ENCODE measurements at regions of chr2 and their contacts with region 1.

Region 1: GRCh38 chr2:182666674-182667314 is 49.3 kb upstream of the DNAJC10 start:
- DNase-seq: peak in 1 of 2 experiments; percentile 20
- H3K4me3 ChIP-seq: no peak overlapping the region
- H3K4me3 Mint-ChIP-seq: no peak overlapping the region
- H3K27ac Mint-ChIP-seq: no peak overlapping the region
- H3K4me1 ChIP-seq: no peaks in the 10 kb centered on the region
- H3K4me1 Mint-ChIP-seq: no peaks in the 10 kb centered on the region
- H3K27me3 ChIP-seq: no peaks in the 10 kb centered on the region; the same call in 1 of the 2 replicates
- H3K27me3 Mint-ChIP-seq: peaks cover 8% of the 10 kb centered on the region
- CTCF ChIP-seq: peak; percentile 69

Region 2: GRCh38 chr2:182186132-182186735 is 480.6 kb before region 1 on chr2:
- CTCF ChIA-PET with region 1: no interaction called
- POLR2A ChIA-PET with region 1: no interaction called
- intact Hi-C with region 1: loop called (anchors 1 kb)
- DNase-seq: peak in 1 of 2 experiments; percentile 52
- H3K4me3 ChIP-seq: no peak overlapping the region
- H3K4me3 Mint-ChIP-seq: no peak overlapping the region
- H3K27ac Mint-ChIP-seq: no peak overlapping the region
- H3K4me1 ChIP-seq: no peaks in the 10 kb centered on the region
- H3K4me1 Mint-ChIP-seq: no peaks in the 10 kb centered on the region
- H3K27me3 ChIP-seq: no peaks in the 10 kb centered on the region
- H3K27me3 Mint-ChIP-seq: no peaks in the 10 kb centered on the region
- CTCF ChIP-seq: peak; percentile 46 to 68

Region 3: GRCh38 chr2:182715896-182716668 is 49.3 kb after region 1 on chr2 and contains the start of gene DNAJC10:
- CTCF ChIA-PET with region 1: interaction called, 3 read pairs
- POLR2A ChIA-PET with region 1: interaction called, 3 read pairs
- intact Hi-C with region 1: loop called (anchors 1 kb)
- DNase-seq: peak; percentile 88 to 94
- H3K4me3 ChIP-seq: peak within 1 kb of the TSS; percentile 62
- H3K4me3 Mint-ChIP-seq: no peak within 1 kb of the TSS
- H3K27ac Mint-ChIP-seq: no peak within 1 kb of the TSS
- H3K4me1 ChIP-seq: peaks cover 13% of the 10 kb centered on the region; the same call in 1 of the 2 replicates
- H3K4me1 Mint-ChIP-seq: peaks cover 14% of the 10 kb centered on the region
- H3K27me3 ChIP-seq: no peaks in the 10 kb centered on the region
- H3K27me3 Mint-ChIP-seq: peaks cover 3% of the 10 kb centered on the region
- CTCF ChIP-seq: no peak
- total RNA-seq, gene DNAJC10: 103 and 109 TPM in 2 replicates

Region 4: DNA sequence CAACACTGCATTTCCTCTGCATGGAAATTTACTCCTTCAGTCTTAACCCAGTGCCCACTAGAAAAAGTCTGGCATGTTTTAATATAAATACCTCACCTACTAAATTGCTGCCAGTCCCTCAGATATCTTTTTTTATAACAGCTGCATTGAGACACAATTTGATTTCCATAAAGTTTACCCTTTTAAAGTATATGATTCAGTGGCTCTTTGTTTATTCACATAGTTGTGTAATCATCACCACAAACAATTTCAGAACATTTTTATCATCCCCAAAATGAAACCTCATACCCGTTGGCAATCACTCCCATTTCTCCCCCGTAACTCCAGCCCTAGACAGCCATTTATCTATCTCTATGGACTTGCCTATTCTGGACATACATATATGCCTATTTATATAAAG is 216.7 kb after region 1 on chr2:
- CTCF ChIA-PET with region 1: no interaction called
- POLR2A ChIA-PET with region 1: no interaction called
- intact Hi-C with region 1: no loop called
- DNase-seq: no peak
- H3K4me3 ChIP-seq: no peak overlapping the region
- H3K4me3 Mint-ChIP-seq: no peak overlapping the region
- H3K27ac Mint-ChIP-seq: no peak overlapping the region
- H3K4me1 ChIP-seq: no peaks in the 10 kb centered on the region
- H3K4me1 Mint-ChIP-seq: no peaks in the 10 kb centered on the region
- H3K27me3 ChIP-seq: no peaks in the 10 kb centered on the region
- H3K27me3 Mint-ChIP-seq: no peaks in the 10 kb centered on the region
- CTCF ChIP-seq: no peak